ENCODE measurements at regions of chr22 and their contacts with region 1.

Region 1: DNA sequence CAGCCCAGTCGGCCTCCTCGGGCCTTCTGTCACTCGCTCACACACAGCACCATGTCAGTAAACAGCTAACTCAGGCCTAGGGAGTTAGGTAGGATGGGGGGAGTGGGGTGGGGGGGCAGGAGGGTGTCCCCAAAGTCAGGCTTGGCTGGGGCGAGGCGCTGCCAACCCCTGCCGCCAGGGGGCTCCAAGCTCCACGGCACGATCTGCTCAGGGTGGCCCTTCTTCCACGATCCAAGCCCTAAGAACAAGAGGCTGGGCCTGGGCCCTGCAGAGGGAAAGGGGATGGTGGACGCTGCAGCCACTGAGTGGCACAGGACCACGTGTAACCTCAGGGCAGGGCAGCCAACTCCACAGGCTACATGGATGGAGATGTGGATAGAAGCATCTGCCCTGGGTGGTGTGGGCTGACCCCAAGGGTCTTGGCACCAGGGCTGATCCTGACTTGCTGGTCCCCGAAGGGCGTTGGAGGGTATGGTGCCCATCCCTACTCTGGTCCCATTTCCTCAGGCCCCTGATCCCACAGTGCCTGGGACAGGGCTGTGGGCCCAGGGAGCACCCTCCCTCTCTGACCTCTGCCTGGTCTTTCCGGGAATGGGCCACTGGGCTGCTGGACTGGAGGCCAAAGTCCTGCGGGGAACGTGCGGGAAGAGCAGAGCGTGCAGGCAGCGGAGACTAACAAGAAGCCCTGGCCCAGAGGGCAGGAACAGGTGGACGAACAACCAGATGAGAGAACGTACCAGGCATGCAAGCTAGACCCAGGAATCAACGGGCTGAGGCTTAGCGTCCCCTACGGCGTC is 29.1 kb upstream of the TXNRD2 start:
- DNase-seq: peak; percentile 66
- H3K4me3 Mint-ChIP-seq: no peak overlapping the region
- H3K27ac Mint-ChIP-seq: no peak overlapping the region
- H3K4me1 Mint-ChIP-seq: no peaks in the 10 kb centered on the region
- H3K27me3 Mint-ChIP-seq: no peaks in the 10 kb centered on the region

Region 2: DNA sequence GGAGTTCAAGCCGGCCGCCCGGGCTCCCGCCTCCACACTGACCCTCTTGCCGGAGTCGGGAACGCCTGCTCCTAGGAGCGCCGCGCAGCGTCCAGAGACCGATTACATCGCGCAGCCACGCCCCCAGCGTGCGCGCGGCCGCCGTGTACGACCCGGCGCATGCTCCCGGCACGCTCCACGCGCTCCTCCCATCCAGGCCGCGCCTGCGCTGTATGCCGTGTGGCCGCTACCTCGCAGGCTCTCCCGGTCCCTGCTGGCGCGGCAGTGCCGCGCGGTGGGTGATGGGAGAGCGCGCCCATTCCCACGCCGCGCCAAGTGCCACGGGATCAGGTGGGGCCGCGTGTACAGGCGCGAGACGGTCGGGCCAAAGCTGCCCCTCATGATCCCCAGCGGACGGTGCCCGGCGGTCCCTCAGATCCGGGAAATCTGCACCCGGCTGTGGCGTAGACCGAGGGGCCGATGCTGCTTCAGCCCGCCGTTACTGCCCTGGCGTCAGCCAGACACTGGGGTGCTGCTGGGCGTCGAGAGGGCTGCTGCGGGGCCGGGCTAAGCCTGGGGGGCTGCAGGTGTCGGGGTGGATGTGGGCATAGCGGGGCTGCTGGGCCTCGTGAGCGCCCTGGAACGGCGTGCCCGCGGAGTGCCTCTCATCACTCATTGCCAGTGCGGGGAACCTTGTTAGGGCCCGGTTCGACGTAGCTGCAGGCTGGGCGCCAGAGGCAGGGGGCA is 115.7 kb before region 1 on chr22 and contains the starts of genes GNB1L and RTL10:
- intact Hi-C with region 1: no loop called
- DNase-seq: peak; percentile 95
- H3K4me3 Mint-ChIP-seq: peak within 1 kb of the TSS; percentile 98
- H3K27ac Mint-ChIP-seq: peak within 1 kb of the TSS; percentile 93
- H3K4me1 Mint-ChIP-seq: peaks cover 35% of the 10 kb centered on the region
- H3K27me3 Mint-ChIP-seq: no peaks in the 10 kb centered on the region
- total RNA-seq, gene GNB1L: 14.7 and 17.7 TPM in 2 replicates
- total RNA-seq, gene RTL10: 16.6 and 19.0 TPM in 2 replicates

Region 3: GRCh38 chr22:19948057-19948760 is 22.5 kb before region 1 on chr22:
- intact Hi-C with region 1: no loop called
- DNase-seq: no peak
- H3K4me3 Mint-ChIP-seq: no peak overlapping the region
- H3K27ac Mint-ChIP-seq: no peak overlapping the region
- H3K4me1 Mint-ChIP-seq: peaks cover 14% of the 10 kb centered on the region
- H3K27me3 Mint-ChIP-seq: no peaks in the 10 kb centered on the region

Region 4: DNA sequence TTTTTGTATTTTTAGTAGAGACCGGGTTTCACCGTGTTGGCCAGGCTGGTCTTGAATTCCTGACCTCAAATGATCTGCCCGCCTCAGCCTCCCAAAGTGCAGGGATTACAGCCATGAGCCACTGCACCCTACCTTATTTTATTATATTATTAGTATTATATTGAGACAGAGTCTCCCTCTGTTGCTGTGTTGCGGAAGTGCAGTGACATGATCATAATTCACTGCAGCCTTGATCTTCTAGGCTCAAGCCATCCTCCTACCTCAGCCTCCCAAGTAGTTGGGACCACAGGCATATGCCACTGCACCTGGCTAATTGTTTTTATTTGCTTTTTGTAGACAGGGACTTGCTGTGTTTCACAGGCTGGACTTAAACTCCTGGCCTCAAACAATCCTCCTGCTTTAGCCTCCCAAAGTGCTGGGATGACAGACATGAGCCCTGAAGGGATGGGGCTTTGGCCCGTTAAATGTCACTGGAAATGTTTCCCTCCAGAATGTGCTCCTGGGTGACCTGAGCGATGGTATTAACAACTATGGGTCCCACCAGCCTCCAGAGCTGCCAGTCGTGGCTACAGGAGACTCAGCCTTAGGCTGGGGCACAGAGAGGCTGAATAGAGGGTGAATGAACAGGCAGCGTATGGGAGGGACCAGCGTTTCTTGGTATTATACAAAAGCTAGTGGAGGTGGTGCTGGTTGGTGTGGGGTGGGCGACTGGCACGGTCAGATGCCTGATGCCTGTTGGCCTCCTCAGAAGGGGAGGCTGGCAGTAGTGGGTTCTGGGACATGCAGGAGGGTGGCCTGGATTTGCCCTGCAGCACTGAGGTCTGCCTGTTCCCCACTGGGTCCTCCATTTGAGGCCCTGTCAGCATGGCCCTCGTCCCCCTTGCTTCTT is 57.5 kb after region 1 on chr22:
- intact Hi-C with region 1: loop called (anchors 5 kb)
- DNase-seq: no peak
- H3K4me3 Mint-ChIP-seq: no peak overlapping the region
- H3K27ac Mint-ChIP-seq: no peak overlapping the region
- H3K4me1 Mint-ChIP-seq: no peaks in the 10 kb centered on the region
- H3K27me3 Mint-ChIP-seq: no peaks in the 10 kb centered on the region

Region 5: GRCh38 chr22:20130739-20131596 is 160.3 kb after region 1 on chr22:
- intact Hi-C with region 1: loop called (anchors 2 kb)
- DNase-seq: peak; percentile 55
- H3K4me3 Mint-ChIP-seq: peak overlapping the region; percentile 37
- H3K27ac Mint-ChIP-seq: no peak overlapping the region
- H3K4me1 Mint-ChIP-seq: peaks cover 12% of the 10 kb centered on the region
- H3K27me3 Mint-ChIP-seq: no peaks in the 10 kb centered on the region